CD4-positive, alpha-beta memory T cell (primary cell): ENCODE measurements at regions of chr9 and their contacts with region 1.

Region 1: GRCh38 chr9:124894741-124895170 is 32.8 kb downstream of the ARPC5L start:
- DNase-seq: peak; percentile 51 to 61 (median 58)
- H3K4me3 ChIP-seq: no peak overlapping the region
- H3K4me3 Mint-ChIP-seq: peak overlapping the region in 3 of 8 donors; percentile 12 to 69 (median 25)
- H3K27ac ChIP-seq: no peak overlapping the region
- H3K27ac Mint-ChIP-seq: peak overlapping the region; percentile 40 to 90 (median 72)
- H3K4me1 ChIP-seq: no peaks in the 10 kb centered on the region
- H3K4me1 Mint-ChIP-seq: peaks cover 7 to 16% (median 13%) of the 10 kb centered on the region in 4 donors
- H3K27me3 ChIP-seq: no peaks in the 10 kb centered on the region
- H3K27me3 Mint-ChIP-seq: no peaks in the 10 kb centered on the region

Region 2: DNA sequence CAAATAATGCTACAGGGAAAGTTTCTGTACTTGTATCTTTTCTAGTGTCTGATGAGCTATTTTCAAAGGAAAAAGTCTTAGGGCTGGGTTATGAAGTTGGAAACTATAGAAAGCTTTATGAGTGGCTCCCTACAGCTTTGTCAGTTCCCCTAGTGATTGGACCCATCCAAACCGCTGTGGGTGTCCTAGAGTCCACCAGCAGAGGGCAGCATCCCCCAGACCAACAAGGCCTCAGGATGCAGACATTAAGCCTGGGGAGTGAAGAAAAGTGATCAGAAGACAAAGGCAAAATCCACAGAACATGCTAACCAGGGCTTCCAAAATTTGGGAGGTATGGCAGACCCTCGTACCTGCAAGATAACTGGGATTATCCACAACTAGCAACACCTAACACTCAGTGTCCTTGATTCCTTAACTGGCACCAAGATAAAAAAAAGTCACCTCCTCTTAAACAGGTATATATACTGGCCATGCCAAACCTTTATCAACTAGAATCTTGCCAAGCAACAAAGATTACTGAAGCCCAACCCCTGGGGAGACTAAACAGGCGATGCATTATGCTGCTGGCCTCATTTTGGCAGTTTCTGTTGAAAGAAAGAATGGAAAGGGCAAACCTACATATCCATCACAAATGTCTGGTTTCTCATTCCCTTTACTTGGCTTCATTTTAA is 277.1 kb before region 1 on chr9:
- CTCF ChIA-PET with region 1: no interaction called
- POLR2A ChIA-PET with region 1: no interaction called
- intact Hi-C with region 1: no loop called
- DNase-seq: peak; percentile 34 to 52 (median 43)
- H3K4me3 ChIP-seq: no peak overlapping the region
- H3K4me3 Mint-ChIP-seq: no peak overlapping the region
- H3K27ac ChIP-seq: no peak overlapping the region
- H3K27ac Mint-ChIP-seq: no peak overlapping the region
- H3K4me1 ChIP-seq: no peaks in the 10 kb centered on the region
- H3K4me1 Mint-ChIP-seq: no peaks in the 10 kb centered on the region
- H3K27me3 ChIP-seq: no peaks in the 10 kb centered on the region
- H3K27me3 Mint-ChIP-seq: peaks cover 4 to 13% of the 10 kb centered on the region in 2 donors

Region 3: GRCh38 chr9:124794902-124795491 is 99.8 kb before region 1 on chr9:
- CTCF ChIA-PET with region 1: no interaction called
- POLR2A ChIA-PET with region 1: no interaction called
- intact Hi-C with region 1: no loop called
- DNase-seq: no peak
- H3K4me3 ChIP-seq: no peak overlapping the region
- H3K4me3 Mint-ChIP-seq: no peak overlapping the region
- H3K27ac ChIP-seq: no peak overlapping the region
- H3K27ac Mint-ChIP-seq: no peak overlapping the region
- H3K4me1 ChIP-seq: no peaks in the 10 kb centered on the region
- H3K4me1 Mint-ChIP-seq: no peaks in the 10 kb centered on the region
- H3K27me3 ChIP-seq: no peaks in the 10 kb centered on the region
- H3K27me3 Mint-ChIP-seq: peaks cover 1 to 8% of the 10 kb centered on the region in 2 donors

Region 4: GRCh38 chr9:124947727-124948391 is 53.1 kb after region 1 on chr9:
- CTCF ChIA-PET with region 1: no interaction called
- POLR2A ChIA-PET with region 1: no interaction called
- intact Hi-C with region 1: no loop called
- DNase-seq: no peak
- H3K4me3 ChIP-seq: no peak overlapping the region
- H3K4me3 Mint-ChIP-seq: no peak overlapping the region
- H3K27ac ChIP-seq: no peak overlapping the region
- H3K27ac Mint-ChIP-seq: no peak overlapping the region
- H3K4me1 ChIP-seq: no peaks in the 10 kb centered on the region
- H3K4me1 Mint-ChIP-seq: peaks cover 0 to under 1% (median 0%) of the 10 kb centered on the region in 4 donors
- H3K27me3 ChIP-seq: no peaks in the 10 kb centered on the region
- H3K27me3 Mint-ChIP-seq: no peaks in the 10 kb centered on the region

Region 5: DNA sequence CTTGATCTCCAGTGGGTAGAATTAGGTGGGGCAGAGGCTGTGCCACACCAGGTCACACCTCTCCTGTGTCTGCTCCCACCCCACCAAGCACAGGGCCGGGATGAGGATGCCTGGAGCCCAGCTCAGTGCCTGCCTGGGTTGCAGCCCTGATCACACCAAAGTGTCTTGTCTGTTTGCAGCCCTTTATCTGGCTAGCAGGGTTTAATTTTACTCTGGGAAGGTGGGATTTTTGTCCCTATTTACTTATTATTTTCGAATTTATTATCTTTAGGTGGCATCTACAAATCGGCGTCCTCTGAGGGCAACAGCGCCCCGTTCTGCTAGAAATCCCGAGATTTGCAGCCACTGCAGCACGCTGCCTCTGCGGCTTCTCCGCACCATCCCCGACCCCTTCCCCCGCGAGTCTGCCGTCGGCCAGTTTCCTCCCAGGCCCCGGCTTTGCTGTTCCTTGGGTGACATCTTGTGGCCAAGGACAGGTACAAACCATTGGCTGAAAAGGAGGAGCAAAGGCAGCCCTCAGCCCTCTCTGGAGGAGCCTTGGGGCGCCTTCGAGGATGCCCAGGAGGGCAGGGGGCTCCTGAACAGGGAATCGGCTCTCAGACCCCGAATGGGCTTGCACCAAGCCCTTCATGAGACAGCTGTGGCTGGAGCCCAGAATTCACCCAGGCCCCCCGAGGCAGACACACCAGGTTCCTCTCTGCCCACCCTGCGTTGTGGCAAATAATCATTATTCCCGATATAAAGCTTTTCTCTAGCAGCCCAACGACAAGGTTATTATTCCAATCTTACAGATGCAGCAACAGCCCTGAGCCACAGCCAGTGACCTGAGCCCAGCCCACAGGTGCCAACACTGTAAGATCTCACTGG is 479.9 kb after region 1 on chr9:
- CTCF ChIA-PET with region 1: no interaction called
- POLR2A ChIA-PET with region 1: no interaction called
- intact Hi-C with region 1: loop called (anchors 5 kb)
- DNase-seq: peak; percentile 57 to 63 (median 62)
- H3K4me3 ChIP-seq: peak overlapping the region in 1 of 2 donors; percentile 18
- H3K4me3 Mint-ChIP-seq: peak overlapping the region in 6 of 8 donors; percentile 7 to 68 (median 50)
- H3K27ac ChIP-seq: no peak overlapping the region
- H3K27ac Mint-ChIP-seq: no peak overlapping the region
- H3K4me1 ChIP-seq: peaks cover 10% of the 10 kb centered on the region
- H3K4me1 Mint-ChIP-seq: peaks cover 0 to 11% (median 6%) of the 10 kb centered on the region in 4 donors
- H3K27me3 ChIP-seq: no peaks in the 10 kb centered on the region
- H3K27me3 Mint-ChIP-seq: peaks cover 5 to 7% of the 10 kb centered on the region in 2 donors